Naive thymus-derived CD4-positive, alpha-beta T cell (primary cell): ENCODE measurements at regions of chr2 and their contacts with region 1.

Region 1: DNA sequence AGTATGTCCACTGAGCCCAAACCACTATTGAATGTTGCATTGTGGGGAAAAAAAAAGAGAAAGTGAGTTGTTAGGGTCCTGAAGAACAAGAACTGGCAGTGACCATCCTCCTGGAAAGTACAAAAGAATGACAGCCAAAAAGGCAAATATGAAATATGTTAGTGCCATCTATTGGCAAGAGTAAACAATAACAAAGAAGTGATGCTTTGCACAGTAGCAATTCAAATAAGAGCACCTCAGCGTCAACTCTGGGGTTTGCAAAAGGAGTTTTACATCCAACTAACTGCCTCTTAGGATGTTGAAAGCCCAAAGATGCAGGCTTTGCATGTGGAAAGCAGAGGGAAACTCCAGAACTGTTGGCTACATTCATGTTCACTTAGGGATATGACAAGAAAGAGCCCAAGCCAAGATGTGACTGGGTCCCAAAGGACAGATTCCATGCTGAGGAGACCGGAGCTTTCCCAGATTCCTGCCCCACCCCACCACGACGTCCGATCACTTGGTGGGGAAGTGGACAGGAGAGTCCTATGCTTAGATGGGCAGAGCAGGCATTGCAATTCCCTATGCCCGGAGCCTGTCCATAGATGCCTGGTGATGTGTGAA is 15.6 kb downstream of the TRABD2A start:
- DNase-seq: peak in 5 of 9 donors; percentile 43 to 67 (median 53)
- ATAC-seq: peak; percentile 72
- H3K4me3 ChIP-seq: no peak overlapping the region
- H3K4me3 Mint-ChIP-seq: peak overlapping the region; percentile 32 to 89 (median 74)
- H3K27ac ChIP-seq: peak overlapping the region; percentile 73
- H3K27ac Mint-ChIP-seq: peak overlapping the region; percentile 70 to 99 (median 96)
- H3K4me1 ChIP-seq: peaks cover 12 to 74% of the 10 kb centered on the region in 2 donors
- H3K4me1 Mint-ChIP-seq: peaks cover 51 to 97% (median 91%) of the 10 kb centered on the region in 7 donors
- H3K27me3 ChIP-seq: no peaks in the 10 kb centered on the region
- H3K27me3 Mint-ChIP-seq: no peaks in the 10 kb centered on the region

Region 2: GRCh38 chr2:84516234-84516986 is 348.9 kb before region 1 on chr2 and contains the start of gene DNAH6:
- CTCF ChIA-PET with region 1: no interaction called
- POLR2A ChIA-PET with region 1: interaction called, 3 read pairs
- intact Hi-C with region 1: loop called in 1 of 2 experiments (anchors 5 kb)
- DNase-seq: peak; percentile 67 to 94 (median 89)
- ATAC-seq: peak; percentile 99
- H3K4me3 ChIP-seq: peak within 1 kb of the TSS; percentile 78
- H3K4me3 Mint-ChIP-seq: peak within 1 kb of the TSS; percentile 79 to 93 (median 90)
- H3K27ac ChIP-seq: peak within 1 kb of the TSS; percentile 75
- H3K27ac Mint-ChIP-seq: peak within 1 kb of the TSS; percentile 66 to 98 (median 93)
- H3K4me1 ChIP-seq: peaks cover 5 to 6% of the 10 kb centered on the region in 2 donors
- H3K4me1 Mint-ChIP-seq: peaks cover 6 to 27% (median 23%) of the 10 kb centered on the region in 7 donors
- H3K27me3 ChIP-seq: no peaks in the 10 kb centered on the region
- H3K27me3 Mint-ChIP-seq: peaks cover 0 to 41% (median 0%) of the 10 kb centered on the region in 5 donors
- total RNA-seq, gene DNAH6: 0.73 to 2.3 (median 1.1) TPM

Region 3: GRCh38 chr2:84631047-84631446 is 234.2 kb before region 1 on chr2:
- CTCF ChIA-PET with region 1: no interaction called
- POLR2A ChIA-PET with region 1: interaction called, 4 read pairs
- intact Hi-C with region 1: loop called (anchors 1 kb)
- DNase-seq: peak in 6 of 9 donors; percentile 21 to 57 (median 50)
- ATAC-seq: peak; percentile 69
- H3K4me3 ChIP-seq: no peak overlapping the region
- H3K4me3 Mint-ChIP-seq: peak overlapping the region in 4 of 10 donors; percentile 5 to 60 (median 34)
- H3K27ac ChIP-seq: no peak overlapping the region
- H3K27ac Mint-ChIP-seq: peak overlapping the region in 5 of 9 donors; percentile 12 to 80 (median 33)
- H3K4me1 ChIP-seq: peaks cover 0 to 15% of the 10 kb centered on the region in 2 donors
- H3K4me1 Mint-ChIP-seq: peaks cover 16 to 56% (median 52%) of the 10 kb centered on the region in 7 donors
- H3K27me3 ChIP-seq: no peaks in the 10 kb centered on the region
- H3K27me3 Mint-ChIP-seq: peaks cover 0 to 2% (median 0%) of the 10 kb centered on the region in 5 donors

Region 4: DNA sequence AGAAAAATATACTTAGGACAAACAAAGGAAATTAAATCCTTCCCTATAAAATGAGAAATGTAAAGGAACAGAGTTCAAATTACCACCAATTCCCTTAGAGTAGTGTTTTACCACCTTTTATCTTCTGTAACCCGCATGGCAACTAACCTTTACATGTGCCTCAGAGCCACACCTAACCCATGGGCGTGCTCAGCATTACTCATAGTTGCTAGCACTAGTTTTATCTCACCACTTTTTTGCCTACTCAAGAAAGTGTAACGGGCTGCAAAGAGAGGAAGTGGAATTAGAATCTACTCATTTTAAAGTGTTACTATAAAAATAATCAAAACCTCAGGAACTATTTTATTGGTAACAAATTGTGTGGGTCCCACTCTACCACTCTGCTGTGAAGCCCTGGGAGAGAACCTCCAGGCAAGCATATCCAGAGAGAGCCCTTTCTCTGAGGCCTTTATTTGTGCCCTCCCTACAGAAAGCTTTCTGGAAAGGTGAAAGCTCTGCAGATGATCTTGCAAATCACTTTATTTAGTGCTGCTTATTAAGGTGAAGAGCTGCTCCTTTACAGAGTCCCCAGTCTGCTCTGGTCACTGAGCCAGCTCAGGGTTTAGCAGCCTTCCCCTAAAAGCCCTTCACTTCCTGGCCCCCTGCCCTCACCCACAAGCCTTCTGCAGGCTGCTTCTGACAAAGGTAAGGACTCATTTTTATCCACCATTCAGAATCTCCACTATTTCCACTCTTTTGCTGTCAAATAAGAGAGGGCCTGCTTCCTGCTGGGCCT is 83.2 kb before region 1 on chr2:
- CTCF ChIA-PET with region 1: no interaction called
- POLR2A ChIA-PET with region 1: interaction called, 9 read pairs
- intact Hi-C with region 1: loop called in 1 of 2 experiments (anchors 1 kb)
- DNase-seq: peak in 8 of 9 donors; percentile 29 to 72 (median 57)
- ATAC-seq: peak; percentile 87
- H3K4me3 ChIP-seq: peak overlapping the region; percentile 18
- H3K4me3 Mint-ChIP-seq: peak overlapping the region in 9 of 10 donors; percentile 54 to 85 (median 73)
- H3K27ac ChIP-seq: peak overlapping the region; percentile 64
- H3K27ac Mint-ChIP-seq: peak overlapping the region; percentile 84 to 96 (median 91)
- H3K4me1 ChIP-seq: peaks cover 52 to 75% of the 10 kb centered on the region in 2 donors
- H3K4me1 Mint-ChIP-seq: peaks cover 50 to 92% (median 87%) of the 10 kb centered on the region in 7 donors
- H3K27me3 ChIP-seq: no peaks in the 10 kb centered on the region
- H3K27me3 Mint-ChIP-seq: no peaks in the 10 kb centered on the region

Region 5: GRCh38 chr2:84840306-84840705 is 25.0 kb before region 1 on chr2:
- CTCF ChIA-PET with region 1: interaction called, 21 read pairs
- POLR2A ChIA-PET with region 1: interaction called, 261 read pairs
- intact Hi-C with region 1: no loop called
- DNase-seq: no peak
- ATAC-seq: peak; percentile 28
- H3K4me3 ChIP-seq: peak overlapping the region; percentile 43
- H3K4me3 Mint-ChIP-seq: peak overlapping the region; percentile 75 to 90 (median 82)
- H3K27ac ChIP-seq: peak overlapping the region; percentile 80
- H3K27ac Mint-ChIP-seq: peak overlapping the region in 8 of 9 donors; percentile 78 to 99 (median 96)
- H3K4me1 ChIP-seq: peaks cover 71 to 95% of the 10 kb centered on the region in 2 donors
- H3K4me1 Mint-ChIP-seq: peaks cover 49 to 97% (median 88%) of the 10 kb centered on the region in 7 donors
- H3K27me3 ChIP-seq: no peaks in the 10 kb centered on the region
- H3K27me3 Mint-ChIP-seq: no peaks in the 10 kb centered on the region

Region 6: DNA sequence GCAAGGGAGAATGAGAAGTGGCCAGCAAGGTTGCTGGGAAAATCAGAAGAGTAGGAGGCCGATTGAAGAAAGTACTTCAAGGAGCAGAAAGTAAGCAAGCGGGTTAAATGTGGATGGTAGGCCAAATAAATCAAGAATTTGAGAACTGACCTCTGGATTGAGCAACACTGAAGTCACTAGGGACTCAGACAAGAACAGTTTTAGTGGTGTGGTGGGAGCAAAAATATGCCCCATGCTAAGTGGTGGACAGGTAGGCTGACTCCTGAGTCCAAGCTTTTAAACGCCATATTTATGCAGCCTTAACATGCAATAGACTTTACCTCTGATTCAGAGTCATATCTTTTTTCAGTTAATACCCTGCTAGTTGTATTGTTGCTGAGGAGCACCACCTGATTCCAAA is 11.1 kb after region 1 on chr2:
- CTCF ChIA-PET with region 1: interaction called, 9 read pairs
- POLR2A ChIA-PET with region 1: interaction called, 69 read pairs
- intact Hi-C with region 1: loop called in 1 of 2 experiments (anchors 2 kb)
- DNase-seq: no peak
- ATAC-seq: no peak
- H3K4me3 ChIP-seq: no peak overlapping the region
- H3K4me3 Mint-ChIP-seq: peak overlapping the region; percentile 1 to 99 (median 96)
- H3K27ac ChIP-seq: peak overlapping the region; percentile 89
- H3K27ac Mint-ChIP-seq: peak overlapping the region; percentile 7 to 98 (median 96)
- H3K4me1 ChIP-seq: peaks cover 0 to 63% of the 10 kb centered on the region in 2 donors
- H3K4me1 Mint-ChIP-seq: peaks cover 44 to 72% (median 63%) of the 10 kb centered on the region in 7 donors
- H3K27me3 ChIP-seq: no peaks in the 10 kb centered on the region
- H3K27me3 Mint-ChIP-seq: peaks cover 0 to 3% (median 0%) of the 10 kb centered on the region in 5 donors